Activated CD4-positive, alpha-beta memory T cell treated with anti-CD3 and anti-CD28 coated beads for 36 hours (primary cell): ENCODE measurements at regions of chr10 and their contacts with region 1.

Region 1: GRCh38 chr10:97292097-97292862 is at the start of gene ARHGAP19:
- DNase-seq: peak; percentile 97
- H3K4me3 Mint-ChIP-seq: peak within 1 kb of the TSS; percentile 94
- H3K27ac Mint-ChIP-seq: peak within 1 kb of the TSS; percentile 87
- H3K4me1 Mint-ChIP-seq: peaks cover 21% of the 10 kb centered on the region
- H3K27me3 Mint-ChIP-seq: no peaks in the 10 kb centered on the region
- total RNA-seq, gene ARHGAP19: 53.2 to 54.2 TPM

Region 2: GRCh38 chr10:97318772-97319651 is 26.7 kb after region 1 on chr10 and contains the start of gene FRAT1:
- CTCF ChIA-PET with region 1: interaction called, 5 read pairs
- POLR2A ChIA-PET with region 1: no interaction called
- intact Hi-C with region 1: loop called (anchors 1 kb)
- DNase-seq: peak; percentile 90
- H3K4me3 Mint-ChIP-seq: peak within 1 kb of the TSS; percentile 83
- H3K27ac Mint-ChIP-seq: peak within 1 kb of the TSS; percentile 97
- H3K4me1 Mint-ChIP-seq: peaks cover 24% of the 10 kb centered on the region
- H3K27me3 Mint-ChIP-seq: peaks cover 6% of the 10 kb centered on the region
- total RNA-seq, gene FRAT1: 2.1 TPM

Region 3: DNA sequence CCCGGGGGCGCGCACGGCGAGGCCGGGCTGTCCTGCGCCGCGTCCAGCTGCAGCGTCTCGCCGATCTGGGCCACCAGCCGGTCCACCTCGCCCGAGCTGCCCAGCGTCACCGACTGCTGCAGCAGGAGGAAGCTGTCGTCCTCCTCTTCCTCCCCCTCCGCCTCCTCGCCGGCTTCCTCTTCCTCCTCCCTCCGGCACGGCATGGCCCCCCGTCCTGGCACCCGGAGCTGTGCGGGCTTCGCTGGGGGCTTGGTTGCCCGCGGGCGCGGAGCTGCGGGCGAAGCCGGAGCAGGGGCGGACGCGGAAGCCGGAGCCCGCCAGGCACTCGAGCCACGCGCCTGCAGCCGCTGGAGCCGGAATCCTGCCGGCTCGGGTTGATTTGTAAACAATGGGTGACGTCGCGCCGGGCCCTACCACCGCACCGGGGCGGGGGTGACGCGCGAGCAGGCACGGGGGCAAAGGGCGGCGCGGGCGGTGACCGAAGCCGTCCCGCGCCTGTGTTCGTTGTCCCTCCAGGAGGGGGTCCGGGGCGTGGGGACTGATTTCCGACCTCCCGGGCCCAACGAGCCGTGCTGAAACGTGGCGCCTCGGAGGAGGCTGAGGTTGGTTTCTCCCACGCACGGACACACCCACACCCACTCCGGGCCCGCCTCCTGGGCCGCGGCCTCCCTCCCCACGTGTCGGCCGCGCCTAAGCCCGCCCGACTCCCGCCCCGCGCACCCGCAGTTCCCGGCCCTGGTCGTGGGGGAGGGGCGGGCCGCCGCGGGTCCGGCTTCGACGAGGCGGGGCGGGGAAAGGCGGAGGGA is 42.3 kb after region 1 on chr10 and contains the start of gene FRAT2:
- CTCF ChIA-PET with region 1: no interaction called
- POLR2A ChIA-PET with region 1: no interaction called
- intact Hi-C with region 1: loop called (anchors 1 kb)
- DNase-seq: peak; percentile 90
- H3K4me3 Mint-ChIP-seq: peak within 1 kb of the TSS; percentile 77
- H3K27ac Mint-ChIP-seq: peak within 1 kb of the TSS; percentile 80
- H3K4me1 Mint-ChIP-seq: peaks cover 38% of the 10 kb centered on the region
- H3K27me3 Mint-ChIP-seq: peaks cover 1% of the 10 kb centered on the region
- total RNA-seq, gene FRAT2: 5.1 to 5.3 TPM

Region 4: GRCh38 chr10:97400665-97401454 is 108.6 kb after region 1 on chr10 and contains the start of gene RRP12:
- CTCF ChIA-PET with region 1: no interaction called
- POLR2A ChIA-PET with region 1: interaction called, 3 read pairs
- intact Hi-C with region 1: loop called (anchors 1 kb)
- DNase-seq: peak; percentile 88
- H3K4me3 Mint-ChIP-seq: peak within 1 kb of the TSS; percentile 93
- H3K27ac Mint-ChIP-seq: peak within 1 kb of the TSS; percentile 88
- H3K4me1 Mint-ChIP-seq: peaks cover 10% of the 10 kb centered on the region
- H3K27me3 Mint-ChIP-seq: no peaks in the 10 kb centered on the region
- total RNA-seq, gene RRP12: 40.4 to 41.8 TPM

Region 5: GRCh38 chr10:97632949-97633884 is 340.9 kb after region 1 on chr10 and contains the start of gene MORN4:
- CTCF ChIA-PET with region 1: no interaction called
- POLR2A ChIA-PET with region 1: no interaction called
- intact Hi-C with region 1: loop called (anchors 10 kb)
- DNase-seq: peak; percentile 95
- H3K4me3 Mint-ChIP-seq: peak within 1 kb of the TSS; percentile 90
- H3K27ac Mint-ChIP-seq: peak within 1 kb of the TSS; percentile 52
- H3K4me1 Mint-ChIP-seq: peaks cover 10% of the 10 kb centered on the region
- H3K27me3 Mint-ChIP-seq: no peaks in the 10 kb centered on the region
- total RNA-seq, gene MORN4: 5.3 to 6.5 TPM

Region 6: DNA sequence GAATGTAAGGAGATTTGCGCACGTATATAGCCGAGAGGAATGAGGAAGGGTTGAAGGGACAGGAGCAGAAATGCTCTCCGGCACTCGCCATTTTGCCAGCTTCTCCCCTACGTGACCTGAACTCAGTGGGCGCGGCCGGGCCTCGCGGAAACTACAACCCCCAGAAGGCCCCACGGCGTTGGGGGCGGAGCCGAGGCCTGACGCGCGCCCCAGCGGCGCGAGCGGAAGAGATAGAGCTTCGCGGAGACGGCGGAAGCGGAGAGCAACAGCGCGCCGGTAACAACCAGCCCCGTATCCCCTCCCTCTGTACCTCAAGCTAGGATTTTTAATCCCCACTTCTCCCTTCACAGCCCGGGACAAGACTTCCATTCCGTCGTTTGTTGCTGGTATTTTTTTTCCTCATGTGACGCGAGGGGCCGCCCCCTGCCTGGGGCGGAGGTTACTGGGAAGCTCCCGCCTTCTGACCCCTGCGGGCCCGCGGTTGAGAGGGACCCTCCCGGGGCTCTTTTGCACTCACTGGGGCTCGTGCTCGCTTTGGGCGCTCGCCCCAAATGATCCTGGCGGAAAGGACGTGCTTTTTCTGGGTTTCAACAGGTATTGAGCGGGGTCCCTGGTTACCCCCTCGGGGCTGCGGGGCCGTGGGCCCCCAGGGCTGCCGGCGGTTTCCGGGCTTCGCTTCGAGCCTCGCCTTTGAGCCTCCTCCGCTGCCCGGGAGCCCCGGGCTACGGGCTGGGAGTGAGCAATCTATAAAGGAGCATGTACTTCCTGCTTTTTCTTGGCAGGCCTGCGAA is 842.3 kb after region 1 on chr10 and contains the start of gene R3HCC1L:
- CTCF ChIA-PET with region 1: no interaction called
- POLR2A ChIA-PET with region 1: no interaction called
- intact Hi-C with region 1: loop called (anchors 5 kb)
- DNase-seq: peak; percentile 97
- H3K4me3 Mint-ChIP-seq: peak within 1 kb of the TSS; percentile 94
- H3K27ac Mint-ChIP-seq: peak within 1 kb of the TSS; percentile 85
- H3K4me1 Mint-ChIP-seq: peaks cover 43% of the 10 kb centered on the region
- H3K27me3 Mint-ChIP-seq: no peaks in the 10 kb centered on the region
- total RNA-seq, gene R3HCC1L: 13.2 to 13.3 TPM